CD8-positive, alpha-beta T cell (primary cell): ENCODE measurements at regions of chr1 and their contacts with region 1.

Region 1: DNA sequence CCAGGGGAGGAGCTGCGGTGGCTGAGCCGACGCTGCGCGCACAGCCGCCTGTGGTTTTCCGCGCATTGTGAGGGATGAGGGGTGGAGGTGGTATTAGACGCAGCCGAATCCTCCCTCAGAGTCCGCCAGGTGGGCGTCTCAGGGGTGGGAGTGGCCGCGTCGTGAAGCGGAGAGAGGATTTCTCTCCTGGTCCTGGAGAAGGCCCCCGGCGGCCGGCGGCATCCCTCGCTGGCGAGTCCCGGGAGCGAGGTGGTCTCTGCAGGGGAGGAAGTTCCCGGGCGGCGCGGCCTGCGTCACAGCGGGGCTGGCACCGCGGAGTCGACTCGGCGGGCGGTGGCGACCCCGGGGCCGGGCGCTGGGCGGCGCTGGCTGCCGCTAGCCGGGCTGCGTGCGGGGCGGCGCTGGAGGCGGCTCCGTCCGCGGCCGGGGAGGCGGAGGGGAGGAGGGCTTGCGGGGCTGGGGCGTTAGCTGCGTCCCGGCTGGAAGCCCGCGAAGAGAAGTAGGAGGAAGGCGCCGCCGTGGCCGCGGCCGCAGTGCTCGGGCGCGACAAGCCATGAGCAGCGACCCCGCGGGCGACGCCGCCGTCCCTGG is at the start of gene LRRC8C:
- DNase-seq: peak; percentile 80 to 96 (median 86)
- ATAC-seq: peak; percentile 77
- H3K4me3 ChIP-seq: peak within 1 kb of the TSS; percentile 80 to 92
- H3K4me3 Mint-ChIP-seq: peak within 1 kb of the TSS; percentile 96
- H3K27ac ChIP-seq: peak within 1 kb of the TSS; percentile 89 to 92
- H3K27ac Mint-ChIP-seq: peak within 1 kb of the TSS; percentile 98
- H3K4me1 ChIP-seq: peaks cover 65% of the 10 kb centered on the region
- H3K4me1 Mint-ChIP-seq: peaks cover 75% of the 10 kb centered on the region
- H3K27me3 ChIP-seq: no peaks in the 10 kb centered on the region
- H3K27me3 Mint-ChIP-seq: no peaks in the 10 kb centered on the region
- CTCF ChIP-seq: peak; percentile 53
- total RNA-seq, gene LRRC8C: 24.0 to 26.7 TPM

Region 2: DNA sequence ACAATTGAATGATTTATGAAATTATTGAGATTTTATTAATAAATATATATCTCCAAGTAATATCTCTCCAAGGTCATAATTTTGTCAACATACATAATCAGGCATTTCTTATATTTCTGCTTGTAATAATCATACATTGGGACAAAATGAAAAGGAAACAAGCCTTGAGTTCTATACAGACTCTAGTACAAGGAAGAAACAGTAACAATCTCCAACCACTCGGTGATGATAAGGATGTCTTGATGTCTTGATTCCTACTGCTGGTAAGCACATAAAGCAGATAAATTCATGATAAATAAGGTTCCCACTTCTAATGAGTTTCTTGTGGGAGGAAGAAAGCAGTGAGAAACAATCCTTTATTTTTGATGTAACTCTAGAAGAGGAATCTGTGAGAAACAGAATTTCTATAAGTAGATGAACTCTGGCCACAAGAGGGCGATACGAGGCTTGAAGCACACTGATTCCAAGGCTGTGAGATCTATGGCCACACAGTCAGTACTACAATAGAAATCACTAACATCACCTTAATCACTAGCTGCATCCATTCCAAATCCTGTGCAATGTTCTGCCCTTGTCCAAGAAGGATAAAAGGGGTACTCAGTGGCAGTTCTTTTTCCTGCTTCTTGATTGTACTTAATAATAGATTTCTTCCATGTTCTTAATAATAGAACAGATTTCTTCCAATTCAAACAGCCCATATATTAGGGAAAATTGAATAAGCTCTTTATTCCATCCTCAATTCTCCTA is 149.6 kb before region 1 on chr1:
- CTCF ChIA-PET with region 1: interaction called, 28 read pairs
- POLR2A ChIA-PET with region 1: no interaction called
- intact Hi-C with region 1: loop called in 1 of 2 experiments (anchors 2 kb)
- DNase-seq: peak; percentile 48 to 85 (median 79)
- ATAC-seq: peak; percentile 92
- H3K4me3 ChIP-seq: no peak overlapping the region
- H3K4me3 Mint-ChIP-seq: no peak overlapping the region
- H3K27ac ChIP-seq: no peak overlapping the region
- H3K27ac Mint-ChIP-seq: no peak overlapping the region
- H3K4me1 ChIP-seq: no peaks in the 10 kb centered on the region
- H3K4me1 Mint-ChIP-seq: peaks cover 9% of the 10 kb centered on the region
- H3K27me3 ChIP-seq: no peaks in the 10 kb centered on the region
- H3K27me3 Mint-ChIP-seq: peaks cover 4% of the 10 kb centered on the region
- CTCF ChIP-seq: peak; percentile 72

Region 3: DNA sequence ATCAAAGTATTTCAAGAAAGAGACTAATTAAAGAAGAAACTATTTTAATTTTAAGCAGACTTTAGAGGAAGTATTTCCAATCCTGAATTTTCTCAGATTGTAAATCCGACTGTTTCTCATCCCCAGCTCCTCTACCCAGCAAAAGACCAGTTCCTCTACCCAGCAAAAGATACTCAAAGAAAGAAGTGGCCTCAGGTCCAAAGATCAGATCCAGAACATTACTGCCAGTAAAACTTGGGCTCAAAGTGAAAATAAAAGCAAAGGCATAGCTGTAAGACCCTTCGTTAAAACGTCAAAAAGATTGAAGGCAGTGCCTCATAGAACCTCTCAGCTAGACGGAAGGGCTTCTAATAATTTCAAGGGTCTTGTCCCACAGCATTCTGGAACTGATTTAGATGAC is 58.1 kb before region 1 on chr1:
- CTCF ChIA-PET with region 1: no interaction called
- POLR2A ChIA-PET with region 1: no interaction called
- intact Hi-C with region 1: no loop called
- DNase-seq: no peak
- ATAC-seq: no peak
- H3K4me3 ChIP-seq: no peak overlapping the region
- H3K4me3 Mint-ChIP-seq: no peak overlapping the region
- H3K27ac ChIP-seq: no peak overlapping the region
- H3K27ac Mint-ChIP-seq: peak overlapping the region; percentile 21
- H3K4me1 ChIP-seq: no peaks in the 10 kb centered on the region
- H3K4me1 Mint-ChIP-seq: peaks cover 11% of the 10 kb centered on the region
- H3K27me3 ChIP-seq: no peaks in the 10 kb centered on the region
- H3K27me3 Mint-ChIP-seq: no peaks in the 10 kb centered on the region
- CTCF ChIP-seq: no peak

Region 4: DNA sequence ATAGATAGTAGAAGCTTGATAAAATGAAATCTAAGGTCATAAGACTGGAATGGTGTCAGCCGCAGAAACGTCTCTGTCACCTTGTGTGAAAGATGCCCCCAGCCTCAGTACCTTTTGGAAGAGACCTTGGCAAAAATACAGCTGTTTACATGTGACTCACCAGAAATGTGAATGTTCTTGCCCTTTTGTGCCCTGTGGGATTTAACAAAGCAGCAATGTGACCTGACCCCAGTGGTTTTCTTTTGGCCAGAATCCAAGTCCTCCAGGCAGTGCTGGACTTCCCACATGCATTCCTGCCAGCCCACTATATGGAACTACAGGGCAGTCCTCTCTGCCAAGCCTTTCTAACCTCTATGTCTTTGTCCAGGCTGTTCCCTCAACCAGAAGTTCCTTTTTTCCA is 27.1 kb before region 1 on chr1:
- CTCF ChIA-PET with region 1: interaction called, 401 read pairs
- POLR2A ChIA-PET with region 1: interaction called, 285 read pairs
- intact Hi-C with region 1: loop called (anchors 1 kb)
- DNase-seq: no peak
- ATAC-seq: no peak
- H3K4me3 ChIP-seq: no peak overlapping the region
- H3K4me3 Mint-ChIP-seq: peak overlapping the region; percentile 46
- H3K27ac ChIP-seq: peak overlapping the region in 1 of 2 experiments; percentile 73
- H3K27ac Mint-ChIP-seq: peak overlapping the region; percentile 100
- H3K4me1 ChIP-seq: peaks cover 94% of the 10 kb centered on the region
- H3K4me1 Mint-ChIP-seq: peaks cover 92% of the 10 kb centered on the region
- H3K27me3 ChIP-seq: no peaks in the 10 kb centered on the region
- H3K27me3 Mint-ChIP-seq: no peaks in the 10 kb centered on the region
- CTCF ChIP-seq: no peak

Region 5: GRCh38 chr1:89657886-89658285 is 25.1 kb after region 1 on chr1:
- CTCF ChIA-PET with region 1: interaction called, 20 read pairs
- POLR2A ChIA-PET with region 1: interaction called, 9 read pairs
- intact Hi-C with region 1: loop called (anchors 2 kb)
- DNase-seq: peak in 3 of 9 experiments; percentile 47 to 87 (median 75)
- ATAC-seq: peak; percentile 74
- H3K4me3 ChIP-seq: no peak overlapping the region
- H3K4me3 Mint-ChIP-seq: peak overlapping the region; percentile 51
- H3K27ac ChIP-seq: peak overlapping the region; percentile 21 to 58
- H3K27ac Mint-ChIP-seq: peak overlapping the region; percentile 88
- H3K4me1 ChIP-seq: peaks cover 73% of the 10 kb centered on the region
- H3K4me1 Mint-ChIP-seq: peaks cover 92% of the 10 kb centered on the region
- H3K27me3 ChIP-seq: no peaks in the 10 kb centered on the region
- H3K27me3 Mint-ChIP-seq: no peaks in the 10 kb centered on the region
- CTCF ChIP-seq: no peak

Region 6: GRCh38 chr1:89698624-89699023 is 65.9 kb after region 1 on chr1:
- CTCF ChIA-PET with region 1: interaction called, 6 read pairs
- POLR2A ChIA-PET with region 1: interaction called, 4 read pairs
- intact Hi-C with region 1: loop called (anchors 2 kb)
- DNase-seq: peak in 2 of 9 experiments; percentile 34 to 62
- ATAC-seq: peak; percentile 37
- H3K4me3 ChIP-seq: no peak overlapping the region
- H3K4me3 Mint-ChIP-seq: peak overlapping the region; percentile 73
- H3K27ac ChIP-seq: peak overlapping the region; percentile 28 to 69
- H3K27ac Mint-ChIP-seq: peak overlapping the region; percentile 93
- H3K4me1 ChIP-seq: peaks cover 68% of the 10 kb centered on the region
- H3K4me1 Mint-ChIP-seq: peaks cover 88% of the 10 kb centered on the region
- H3K27me3 ChIP-seq: no peaks in the 10 kb centered on the region
- H3K27me3 Mint-ChIP-seq: no peaks in the 10 kb centered on the region
- CTCF ChIP-seq: no peak

Region 7: DNA sequence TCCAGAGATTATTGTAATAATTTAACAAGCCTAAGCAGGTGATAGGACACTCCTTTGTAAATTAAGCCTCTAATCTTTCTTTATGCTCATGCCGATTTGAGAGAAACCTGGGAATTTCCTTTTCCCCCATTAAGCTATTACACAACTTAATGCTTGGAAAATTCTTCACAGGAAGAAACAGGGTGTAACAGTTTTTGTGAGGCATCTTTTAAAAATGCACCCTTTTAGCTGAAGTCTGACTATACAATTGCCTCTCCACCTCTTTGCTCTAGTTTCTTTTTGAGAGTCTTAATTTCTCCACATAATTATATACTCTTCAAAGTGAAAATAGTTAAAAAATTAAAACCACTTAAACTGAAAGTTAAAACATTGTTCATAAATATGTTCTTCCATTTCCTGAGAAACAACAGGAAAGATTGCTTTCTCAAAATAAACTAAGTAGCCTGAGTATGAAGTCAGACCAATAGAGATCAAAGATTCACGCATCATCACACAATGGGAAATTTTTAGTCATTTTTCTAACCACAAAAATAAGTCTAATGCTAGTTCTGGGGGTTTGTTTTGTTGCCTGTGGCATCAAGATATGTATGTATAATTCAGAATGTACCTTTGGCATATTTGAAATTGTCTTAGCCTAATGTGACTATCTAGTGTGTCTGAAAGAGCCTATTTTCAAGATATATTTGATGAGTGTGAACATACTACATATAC is 222.8 kb after region 1 on chr1:
- CTCF ChIA-PET with region 1: no interaction called
- POLR2A ChIA-PET with region 1: no interaction called
- intact Hi-C with region 1: loop called in 1 of 2 experiments (anchors 10 kb)
- DNase-seq: peak in 2 of 9 experiments; percentile 62 to 83
- ATAC-seq: peak; percentile 80
- H3K4me3 ChIP-seq: no peak overlapping the region
- H3K4me3 Mint-ChIP-seq: no peak overlapping the region
- H3K27ac ChIP-seq: peak overlapping the region; percentile 43 to 66
- H3K27ac Mint-ChIP-seq: no peak overlapping the region
- H3K4me1 ChIP-seq: peaks cover 38% of the 10 kb centered on the region
- H3K4me1 Mint-ChIP-seq: peaks cover 18% of the 10 kb centered on the region
- H3K27me3 ChIP-seq: no peaks in the 10 kb centered on the region
- H3K27me3 Mint-ChIP-seq: no peaks in the 10 kb centered on the region
- CTCF ChIP-seq: no peak

Region 8: DNA sequence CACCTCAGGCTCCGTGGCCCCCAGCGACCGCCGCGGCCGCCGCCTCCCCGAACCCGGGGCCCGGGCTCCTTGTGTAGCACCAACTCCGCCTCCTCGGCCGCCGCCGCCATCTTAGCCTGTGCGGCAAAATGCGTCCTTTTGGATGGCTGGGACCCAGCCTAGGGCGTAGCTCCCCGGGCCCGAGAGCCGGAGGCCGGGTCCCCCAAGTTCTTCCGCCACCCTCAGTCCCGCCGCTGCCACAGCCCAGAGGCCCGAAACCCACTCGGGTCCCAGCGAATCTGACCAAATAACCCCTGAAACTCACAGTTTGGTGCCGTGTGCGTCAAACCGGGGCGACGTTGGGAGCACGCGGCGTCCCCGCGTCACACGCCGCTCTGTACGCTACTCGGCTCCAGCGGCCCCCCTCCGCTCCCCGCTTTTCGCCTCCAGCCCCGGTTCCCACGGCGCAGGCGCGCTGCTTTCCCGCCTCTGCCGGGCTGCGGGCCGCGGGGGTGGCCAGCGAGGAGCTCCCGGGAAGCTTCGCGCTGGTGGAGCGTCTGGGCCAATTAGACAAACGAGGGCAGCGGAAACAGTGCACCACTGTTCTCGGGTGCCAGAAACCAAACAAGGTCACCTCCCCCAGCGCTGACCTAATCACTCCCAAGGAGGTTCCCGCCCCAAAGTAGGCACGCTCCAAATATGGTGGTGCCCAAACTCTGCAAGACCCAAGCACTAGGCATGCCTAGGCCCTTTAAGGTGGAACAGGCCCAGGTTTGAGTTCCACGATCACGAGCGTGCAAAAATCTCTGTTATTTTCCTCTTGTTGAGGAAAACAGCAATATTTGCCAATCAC is 1389.2 kb after region 1 on chr1 and contains the start of gene ZNF644:
- CTCF ChIA-PET with region 1: no interaction called
- POLR2A ChIA-PET with region 1: no interaction called
- intact Hi-C with region 1: loop called in 1 of 2 experiments (anchors 5 kb)
- DNase-seq: peak; percentile 76 to 97 (median 89)
- ATAC-seq: peak; percentile 84
- H3K4me3 ChIP-seq: peak within 1 kb of the TSS; percentile 75 to 98
- H3K4me3 Mint-ChIP-seq: peak within 1 kb of the TSS; percentile 97
- H3K27ac ChIP-seq: peak within 1 kb of the TSS; percentile 99 to 100
- H3K27ac Mint-ChIP-seq: peak within 1 kb of the TSS; percentile 99
- H3K4me1 ChIP-seq: peaks cover 49% of the 10 kb centered on the region
- H3K4me1 Mint-ChIP-seq: peaks cover 64% of the 10 kb centered on the region
- H3K27me3 ChIP-seq: no peaks in the 10 kb centered on the region
- H3K27me3 Mint-ChIP-seq: no peaks in the 10 kb centered on the region
- CTCF ChIP-seq: no peak
- total RNA-seq, gene ZNF644: 105 to 109 TPM